ENCODE measurements at regions of chr12 and their contacts with region 1.

Region 1: GRCh38 chr12:42407306-42407705 is 81.3 kb downstream of the PPHLN1 start:
- DNase-seq: no peak
- ATAC-seq: no peak
- H3K4me3 ChIP-seq: no peak overlapping the region
- H3K27ac ChIP-seq: no peak overlapping the region
- H3K4me1 ChIP-seq: no peaks in the 10 kb centered on the region
- H3K27me3 ChIP-seq: no peaks in the 10 kb centered on the region
- CTCF ChIP-seq: no peak
- EP300 ChIP-seq: no peak
- POLR2A ChIP-seq: no peak
- RAD21 ChIP-seq: no peak

Region 2: DNA sequence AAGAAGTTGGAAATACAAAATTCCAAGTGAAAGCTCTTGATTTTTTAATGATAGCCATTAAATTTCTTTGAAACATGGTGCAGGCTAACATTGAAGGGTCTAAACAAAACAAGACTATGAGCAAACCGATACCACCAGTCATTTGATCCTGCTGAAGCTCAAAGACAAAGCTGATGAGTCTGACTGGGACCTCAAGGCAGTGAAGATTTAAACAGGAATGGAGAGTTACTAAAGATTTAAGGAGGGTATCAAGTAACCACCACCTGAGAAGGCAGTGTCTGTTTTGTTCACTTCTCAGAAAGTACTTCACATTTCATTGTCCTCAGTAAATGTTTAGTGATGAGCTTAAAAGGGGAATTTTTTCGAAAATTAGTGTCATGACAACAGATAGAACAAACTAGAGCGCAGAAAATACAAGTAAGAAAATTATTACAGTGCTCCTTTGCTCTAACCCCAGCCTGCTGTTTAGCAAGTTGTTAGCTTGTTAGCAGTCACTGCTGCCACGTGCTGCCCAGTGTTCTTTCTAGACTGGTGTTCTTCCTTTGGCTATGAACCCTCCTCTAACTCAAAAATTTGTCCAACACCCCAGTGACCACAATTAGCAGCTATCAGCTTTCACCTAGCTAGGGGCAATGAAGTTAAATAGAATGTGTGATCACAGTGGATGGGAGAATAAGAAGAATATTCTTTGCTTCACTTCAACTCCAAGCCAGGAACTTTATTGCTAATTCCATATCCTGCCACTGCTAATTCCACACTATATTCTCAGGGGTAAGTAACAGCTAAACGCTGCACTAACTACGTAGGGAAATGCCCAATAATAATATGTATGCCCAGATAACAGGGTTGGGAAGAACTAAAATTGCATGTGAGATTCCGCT is 210.3 kb before region 1 on chr12:
- CTCF ChIA-PET with region 1: no interaction called
- POLR2A ChIA-PET with region 1: no interaction called
- RAD21 ChIA-PET with region 1: no interaction called
- SMC1A ChIA-PET with region 1: no interaction called
- in situ Hi-C with region 1: no loop called
- intact Hi-C with region 1: no loop called
- DNase-seq: no peak
- ATAC-seq: no peak
- H3K4me3 ChIP-seq: no peak overlapping the region
- H3K27ac ChIP-seq: no peak overlapping the region
- H3K4me1 ChIP-seq: no peaks in the 10 kb centered on the region
- H3K27me3 ChIP-seq: no peaks in the 10 kb centered on the region
- CTCF ChIP-seq: no peak
- EP300 ChIP-seq: no peak
- POLR2A ChIP-seq: no peak
- RAD21 ChIP-seq: no peak

Region 3: DNA sequence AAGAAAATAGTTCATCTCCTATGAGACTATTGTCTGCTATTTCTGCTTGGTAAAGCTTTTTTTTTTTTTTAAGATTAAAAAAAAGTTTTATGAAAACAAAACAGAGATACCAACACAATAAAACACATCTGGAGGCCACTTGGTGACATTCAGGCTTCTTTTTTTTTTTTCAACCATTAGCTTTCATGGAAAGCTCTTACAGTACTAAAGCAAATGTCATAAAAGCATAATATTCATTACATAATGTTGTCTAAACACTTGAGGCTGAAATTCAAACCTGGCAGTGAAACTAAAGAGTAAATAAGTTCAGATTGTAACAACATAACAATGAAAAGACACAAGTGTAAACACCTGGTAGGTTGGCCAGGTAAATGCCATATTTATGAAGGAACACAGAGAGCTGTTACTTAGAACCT is 167.6 kb after region 1 on chr12:
- CTCF ChIA-PET with region 1: no interaction called
- POLR2A ChIA-PET with region 1: no interaction called
- RAD21 ChIA-PET with region 1: no interaction called
- SMC1A ChIA-PET with region 1: interaction called, 3 read pairs
- in situ Hi-C with region 1: no loop called
- intact Hi-C with region 1: loop called (anchors 10 kb)
- DNase-seq: no peak
- ATAC-seq: no peak
- H3K4me3 ChIP-seq: no peak overlapping the region
- H3K27ac ChIP-seq: no peak overlapping the region
- H3K4me1 ChIP-seq: no peaks in the 10 kb centered on the region; the same call in 1 of the 2 replicates
- H3K27me3 ChIP-seq: peaks cover 0 to 4% of the 10 kb centered on the region in 2 experiments; a peak in 1 of 4 replicates
- CTCF ChIP-seq: no peak
- EP300 ChIP-seq: no peak
- POLR2A ChIP-seq: no peak
- RAD21 ChIP-seq: no peak